Activated CD4-positive, alpha-beta memory T cell treated with anti-CD3 and anti-CD28 coated beads, Interleukin-2, amount 10 ng/mL, durations not matched to agents 7 days and 5 days (primary cell): ENCODE measurements at regions of chr1 and their contacts with region 1.

Region 1: DNA sequence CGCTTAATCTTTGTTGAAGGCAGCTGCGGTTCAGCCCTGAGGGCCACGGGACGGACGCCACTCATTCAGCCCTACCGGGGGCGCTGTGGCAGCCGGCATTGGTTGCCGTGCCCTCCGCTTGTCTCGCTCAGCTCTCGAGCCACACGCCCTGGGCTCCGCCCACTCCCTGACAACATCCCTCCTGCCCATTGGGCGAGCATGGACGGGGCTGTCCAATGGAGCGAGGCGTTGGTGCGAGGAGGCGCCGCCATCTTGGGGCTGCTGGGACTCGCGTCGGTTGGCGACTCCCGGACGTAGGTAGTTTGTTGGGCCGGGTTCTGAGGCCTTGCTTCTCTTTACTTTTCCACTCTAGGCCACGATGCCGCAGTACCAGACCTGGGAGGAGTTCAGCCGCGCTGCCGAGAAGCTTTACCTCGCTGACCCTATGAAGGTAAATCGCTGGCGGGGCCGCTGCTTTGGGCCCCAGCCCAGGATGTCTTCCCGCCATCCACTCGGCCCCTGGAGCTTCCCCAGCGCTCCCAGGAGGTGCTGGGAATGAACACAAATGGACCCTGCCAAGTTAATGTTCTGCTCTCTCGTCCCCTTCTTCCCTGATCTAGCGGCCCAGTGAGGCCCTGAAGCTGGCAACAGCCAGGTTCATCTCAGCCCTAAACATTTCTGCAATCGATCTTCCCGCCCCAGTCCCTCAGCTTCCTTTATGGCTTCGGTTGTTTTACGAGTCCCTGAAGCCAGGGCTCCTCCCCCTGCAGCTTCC is at the start of gene SRP9:
- DNase-seq: peak; percentile 99
- H3K4me3 Mint-ChIP-seq: no peak within 1 kb of the TSS
- H3K27ac Mint-ChIP-seq: no peak within 1 kb of the TSS
- H3K4me1 Mint-ChIP-seq: peaks cover 29% of the 10 kb centered on the region
- H3K27me3 Mint-ChIP-seq: no peaks in the 10 kb centered on the region
- total RNA-seq, gene SRP9: 246 to 253 TPM

Region 2: DNA sequence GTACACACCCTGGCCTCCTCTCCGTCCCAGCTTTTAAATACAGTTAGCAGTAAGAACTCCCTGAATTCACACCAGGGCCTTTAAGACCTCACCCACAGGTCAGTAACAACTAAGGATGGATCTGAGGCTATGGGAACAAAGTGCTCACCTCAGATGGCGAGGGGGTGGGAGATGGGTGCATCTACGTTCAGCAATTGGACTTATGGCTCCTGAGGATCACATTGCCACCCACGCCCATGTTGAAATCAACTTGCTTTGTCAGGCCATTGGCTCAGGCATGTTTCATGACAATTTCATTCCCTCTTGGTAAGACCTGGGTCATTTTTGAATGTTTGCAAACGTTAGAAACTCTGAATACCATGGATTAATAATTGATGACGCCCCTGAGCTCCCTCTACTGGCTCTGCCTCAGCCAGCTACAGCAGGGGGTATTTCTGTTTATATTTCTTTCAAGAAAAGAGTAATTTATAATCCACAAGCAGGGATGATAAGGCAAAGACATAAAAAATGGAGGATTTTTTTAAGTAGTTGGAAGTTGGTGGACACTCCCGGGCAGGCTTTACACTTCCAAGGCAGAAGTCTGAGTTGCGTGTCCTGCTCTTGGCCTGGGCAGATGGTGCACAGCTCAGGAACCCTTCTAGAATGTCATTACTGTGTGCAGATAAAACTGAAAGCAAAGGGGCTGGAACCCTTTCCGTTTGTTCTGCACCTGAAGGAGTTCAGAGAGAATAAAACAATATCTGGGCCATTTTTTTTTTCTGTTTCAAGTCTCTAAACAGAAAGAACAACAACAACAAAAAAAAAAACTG is 336.2 kb before region 1 on chr1:
- CTCF ChIA-PET with region 1: interaction called, 5 read pairs
- POLR2A ChIA-PET with region 1: interaction called, 25 read pairs
- DNase-seq: no peak
- H3K4me3 Mint-ChIP-seq: peak overlapping the region; percentile 38
- H3K27ac Mint-ChIP-seq: peak overlapping the region; percentile 71
- H3K4me1 Mint-ChIP-seq: peaks cover 56% of the 10 kb centered on the region
- H3K27me3 Mint-ChIP-seq: no peaks in the 10 kb centered on the region

Region 3: DNA sequence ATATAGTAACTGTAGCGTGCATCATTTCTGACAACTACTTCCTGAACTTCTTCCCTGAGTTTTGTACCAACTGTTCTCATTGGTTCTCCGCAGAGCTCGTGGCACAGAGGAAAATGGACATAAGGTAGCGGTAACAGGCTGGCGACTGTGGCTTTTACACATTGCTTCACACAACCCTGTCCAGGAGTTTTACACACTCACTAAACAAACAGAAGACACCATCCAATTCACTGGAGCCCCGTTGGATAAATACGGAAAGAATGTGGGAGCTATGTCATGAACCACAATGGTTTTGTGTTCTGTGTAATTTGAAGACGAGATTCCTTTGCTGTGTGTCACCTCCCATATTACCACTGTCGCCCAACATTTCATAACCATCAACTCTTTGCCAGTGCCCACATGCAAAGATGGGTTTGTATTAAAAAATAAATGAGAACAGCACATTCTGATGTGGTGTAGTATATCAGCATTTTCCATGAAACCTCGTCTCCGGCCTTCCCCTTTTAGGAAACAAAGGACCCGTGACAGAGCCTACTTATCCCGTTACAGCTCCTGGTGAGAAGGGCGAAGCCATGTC is 77.5 kb before region 1 on chr1:
- CTCF ChIA-PET with region 1: no interaction called
- POLR2A ChIA-PET with region 1: no interaction called
- DNase-seq: no peak
- H3K4me3 Mint-ChIP-seq: no peak overlapping the region
- H3K27ac Mint-ChIP-seq: no peak overlapping the region
- H3K4me1 Mint-ChIP-seq: no peaks in the 10 kb centered on the region
- H3K27me3 Mint-ChIP-seq: no peaks in the 10 kb centered on the region

Region 4: DNA sequence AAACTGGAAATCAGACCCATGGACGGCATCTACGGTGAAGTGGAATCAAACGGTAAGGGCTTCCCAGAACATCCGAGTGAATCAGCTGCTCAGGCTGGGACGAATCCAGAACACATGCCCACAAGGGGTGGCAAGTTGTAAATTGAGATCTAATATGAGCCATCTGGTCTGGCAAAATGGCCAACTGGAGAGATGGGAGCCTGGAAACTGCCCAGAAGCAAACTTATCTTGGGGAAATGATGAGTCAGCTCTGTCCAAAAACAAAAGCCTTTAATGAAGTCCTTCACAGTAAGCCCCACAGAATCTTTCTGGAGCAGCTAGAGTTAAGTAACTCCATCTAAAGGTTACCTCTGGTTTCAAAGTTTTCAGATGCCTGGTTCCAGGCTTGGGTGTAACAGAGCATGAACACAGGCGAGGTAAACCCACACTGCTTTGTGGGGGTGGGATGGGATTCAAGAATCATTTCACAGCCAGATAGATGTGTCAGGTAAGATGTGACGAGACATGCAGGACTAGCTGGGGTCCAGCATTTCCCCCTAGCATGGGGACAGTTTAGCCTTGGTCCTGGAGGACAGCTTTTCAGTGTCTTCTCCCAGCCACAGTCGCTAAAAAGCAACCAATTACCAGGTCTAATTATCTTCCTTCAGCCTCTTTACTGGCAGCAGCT is 10.7 kb before region 1 on chr1:
- CTCF ChIA-PET with region 1: interaction called, 12 read pairs
- POLR2A ChIA-PET with region 1: interaction called, 32 read pairs
- DNase-seq: no peak
- H3K4me3 Mint-ChIP-seq: no peak overlapping the region
- H3K27ac Mint-ChIP-seq: no peak overlapping the region
- H3K4me1 Mint-ChIP-seq: no peaks in the 10 kb centered on the region
- H3K27me3 Mint-ChIP-seq: no peaks in the 10 kb centered on the region

Region 5: GRCh38 chr1:225881969-225882693 is 104.4 kb after region 1 on chr1 and contains the start of gene TMEM63A:
- CTCF ChIA-PET with region 1: interaction called, 30 read pairs
- POLR2A ChIA-PET with region 1: interaction called, 82 read pairs
- DNase-seq: peak; percentile 90
- H3K4me3 Mint-ChIP-seq: peak within 1 kb of the TSS; percentile 89
- H3K27ac Mint-ChIP-seq: peak within 1 kb of the TSS; percentile 88
- H3K4me1 Mint-ChIP-seq: peaks cover 50% of the 10 kb centered on the region
- H3K27me3 Mint-ChIP-seq: peaks cover 9% of the 10 kb centered on the region
- total RNA-seq, gene TMEM63A: 126 to 127 TPM

Region 6: GRCh38 chr1:225911191-225912130 is 133.7 kb after region 1 on chr1:
- CTCF ChIA-PET with region 1: interaction called, 13 read pairs
- POLR2A ChIA-PET with region 1: interaction called, 10 read pairs
- DNase-seq: peak; percentile 74
- H3K4me3 Mint-ChIP-seq: no peak overlapping the region
- H3K27ac Mint-ChIP-seq: no peak overlapping the region
- H3K4me1 Mint-ChIP-seq: peaks cover 4% of the 10 kb centered on the region
- H3K27me3 Mint-ChIP-seq: peaks cover 6% of the 10 kb centered on the region

Region 7: GRCh38 chr1:225977937-225978748 is 200.4 kb after region 1 on chr1:
- CTCF ChIA-PET with region 1: interaction called, 20 read pairs
- POLR2A ChIA-PET with region 1: no interaction called
- DNase-seq: peak; percentile 10
- H3K4me3 Mint-ChIP-seq: no peak overlapping the region
- H3K27ac Mint-ChIP-seq: no peak overlapping the region
- H3K4me1 Mint-ChIP-seq: peaks cover 10% of the 10 kb centered on the region
- H3K27me3 Mint-ChIP-seq: no peaks in the 10 kb centered on the region